Breast epithelium (tissue), 4 donors: ENCODE measurements at regions of chr22 and their contacts with region 1.

Region 1: DNA sequence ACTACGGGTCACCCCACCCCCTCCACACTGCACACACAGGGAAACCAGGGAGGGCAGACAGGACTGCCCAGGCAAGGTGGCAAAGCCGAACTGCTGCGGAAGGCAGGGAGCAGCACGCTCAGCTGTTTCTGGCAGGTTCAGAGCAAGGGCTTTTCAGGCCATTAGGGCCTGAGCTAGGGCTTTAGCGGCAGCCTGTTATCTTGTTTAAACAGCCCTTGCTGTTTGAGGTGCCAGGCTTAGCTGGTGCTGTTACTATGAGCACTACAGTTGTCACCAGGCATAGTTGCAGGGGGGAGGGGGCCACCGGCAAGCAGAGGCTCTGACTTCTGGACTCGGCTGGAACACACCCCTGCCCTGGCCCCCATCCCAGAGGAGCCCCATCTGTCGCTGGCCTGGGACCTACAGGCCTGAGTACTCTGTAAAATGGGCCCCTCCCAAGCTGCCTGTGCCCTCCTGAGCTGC is 34.9 kb downstream of the RSPH14 start:
- DNase-seq: no peak
- H3K4me3 ChIP-seq: no peak overlapping the region
- H3K27ac ChIP-seq: no peak overlapping the region
- H3K4me1 ChIP-seq: no peaks in the 10 kb centered on the region
- H3K27me3 ChIP-seq: no peaks in the 10 kb centered on the region
- CTCF ChIP-seq: no peak
- POLR2A ChIP-seq: no peak

Region 2: GRCh38 chr22:23126165-23127054 is 19.5 kb after region 1 on chr22:
- intact Hi-C with region 1: loop called (anchors 1 kb)
- DNase-seq: no peak
- H3K4me3 ChIP-seq: no peak overlapping the region
- H3K27ac ChIP-seq: no peak overlapping the region
- H3K4me1 ChIP-seq: no peaks in the 10 kb centered on the region
- H3K27me3 ChIP-seq: no peaks in the 10 kb centered on the region
- CTCF ChIP-seq: no peak
- POLR2A ChIP-seq: no peak

Region 3: GRCh38 chr22:23137905-23138561 is 31.1 kb after region 1 on chr22:
- intact Hi-C with region 1: no loop called
- DNase-seq: peak in 1 of 2 donors; percentile 36
- H3K4me3 ChIP-seq: no peak overlapping the region
- H3K27ac ChIP-seq: peak overlapping the region; percentile 60 to 74
- H3K4me1 ChIP-seq: no peaks in the 10 kb centered on the region
- H3K27me3 ChIP-seq: no peaks in the 10 kb centered on the region
- CTCF ChIP-seq: no peak
- POLR2A ChIP-seq: no peak